ENCODE measurements at regions of chr1 and their contacts with region 1.

Region 1: DNA sequence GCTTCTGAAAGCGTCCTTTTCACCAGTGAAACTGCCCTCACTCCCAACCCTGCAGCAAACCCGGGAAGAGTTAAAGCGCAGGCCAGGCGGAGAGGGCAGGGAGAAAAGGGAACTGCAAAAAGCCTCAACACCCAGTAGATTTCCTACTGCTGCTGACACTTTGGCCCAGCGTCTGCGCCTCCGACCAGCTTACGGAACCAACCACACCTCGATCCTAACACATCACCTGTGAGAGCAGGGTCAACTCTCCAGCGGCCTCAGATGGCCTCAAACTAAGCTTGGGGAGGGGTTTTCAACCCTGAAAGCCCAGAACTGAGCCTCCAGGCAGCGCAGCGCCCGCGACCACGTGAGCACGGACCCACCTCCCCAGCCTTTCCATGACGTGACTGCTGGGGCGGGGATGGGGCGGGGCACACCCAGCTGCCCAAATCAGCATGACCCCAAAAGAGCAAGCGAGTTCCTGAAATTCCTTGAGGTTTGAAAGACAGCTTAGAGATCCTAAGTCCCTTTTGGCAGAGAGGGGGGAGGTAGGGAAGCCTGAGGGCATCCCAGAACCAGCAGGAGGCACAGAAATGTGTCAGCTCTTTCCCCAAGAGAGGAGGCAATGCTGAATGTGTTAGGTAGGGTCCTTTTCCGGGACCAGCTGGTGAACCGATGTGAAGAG is 59.1 kb downstream of the ITPKB start:
- DNase-seq: peak; percentile 79
- H3K4me3 Mint-ChIP-seq: peak overlapping the region; percentile 70
- H3K27ac Mint-ChIP-seq: peak overlapping the region; percentile 79
- H3K4me1 Mint-ChIP-seq: peaks cover 82% of the 10 kb centered on the region
- H3K27me3 Mint-ChIP-seq: no peaks in the 10 kb centered on the region

Region 2: GRCh38 chr1:226653311-226653921 is 26.6 kb before region 1 on chr1:
- CTCF ChIA-PET with region 1: interaction called, 5 read pairs
- POLR2A ChIA-PET with region 1: interaction called, 113 read pairs
- DNase-seq: peak; percentile 75
- H3K4me3 Mint-ChIP-seq: peak overlapping the region; percentile 56
- H3K27ac Mint-ChIP-seq: peak overlapping the region; percentile 88
- H3K4me1 Mint-ChIP-seq: peaks cover 62% of the 10 kb centered on the region
- H3K27me3 Mint-ChIP-seq: no peaks in the 10 kb centered on the region

Region 3: DNA sequence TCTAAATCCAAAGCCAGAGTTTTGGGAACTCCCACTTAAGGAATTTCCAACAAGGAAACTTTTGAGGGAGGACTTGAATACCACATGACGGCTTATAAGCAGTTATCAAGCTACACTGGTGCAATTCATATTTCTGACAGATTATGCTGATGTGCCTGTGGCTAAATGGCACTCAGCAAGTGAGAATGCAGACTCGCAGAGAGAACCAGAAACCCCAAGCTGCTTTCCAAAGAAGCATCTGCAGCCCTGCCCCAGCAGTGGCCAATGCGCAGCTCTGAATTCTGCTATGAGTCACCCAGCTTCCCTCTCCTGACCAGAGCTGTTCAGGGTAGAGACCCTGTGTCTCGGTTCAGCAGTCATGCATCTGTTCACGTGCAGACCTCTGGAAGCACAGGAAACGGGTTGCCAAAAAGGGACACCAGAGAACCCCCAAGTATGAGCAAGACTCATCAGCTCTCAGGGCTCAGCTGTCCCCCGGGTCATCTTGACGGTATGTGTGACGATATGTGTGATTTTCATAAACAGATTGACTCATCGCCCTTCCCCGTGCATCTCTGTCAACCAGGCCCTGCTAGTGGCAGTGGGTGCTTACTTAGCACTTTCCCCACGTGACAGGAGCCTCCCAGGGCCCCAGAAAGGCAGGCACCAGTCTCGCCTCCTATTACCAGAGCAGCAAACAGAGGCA is 17.2 kb before region 1 on chr1:
- CTCF ChIA-PET with region 1: interaction called, 5 read pairs
- POLR2A ChIA-PET with region 1: interaction called, 113 read pairs
- DNase-seq: peak; percentile 89
- H3K4me3 Mint-ChIP-seq: peak overlapping the region; percentile 57
- H3K27ac Mint-ChIP-seq: peak overlapping the region; percentile 92
- H3K4me1 Mint-ChIP-seq: peaks cover 86% of the 10 kb centered on the region
- H3K27me3 Mint-ChIP-seq: no peaks in the 10 kb centered on the region

Region 4: DNA sequence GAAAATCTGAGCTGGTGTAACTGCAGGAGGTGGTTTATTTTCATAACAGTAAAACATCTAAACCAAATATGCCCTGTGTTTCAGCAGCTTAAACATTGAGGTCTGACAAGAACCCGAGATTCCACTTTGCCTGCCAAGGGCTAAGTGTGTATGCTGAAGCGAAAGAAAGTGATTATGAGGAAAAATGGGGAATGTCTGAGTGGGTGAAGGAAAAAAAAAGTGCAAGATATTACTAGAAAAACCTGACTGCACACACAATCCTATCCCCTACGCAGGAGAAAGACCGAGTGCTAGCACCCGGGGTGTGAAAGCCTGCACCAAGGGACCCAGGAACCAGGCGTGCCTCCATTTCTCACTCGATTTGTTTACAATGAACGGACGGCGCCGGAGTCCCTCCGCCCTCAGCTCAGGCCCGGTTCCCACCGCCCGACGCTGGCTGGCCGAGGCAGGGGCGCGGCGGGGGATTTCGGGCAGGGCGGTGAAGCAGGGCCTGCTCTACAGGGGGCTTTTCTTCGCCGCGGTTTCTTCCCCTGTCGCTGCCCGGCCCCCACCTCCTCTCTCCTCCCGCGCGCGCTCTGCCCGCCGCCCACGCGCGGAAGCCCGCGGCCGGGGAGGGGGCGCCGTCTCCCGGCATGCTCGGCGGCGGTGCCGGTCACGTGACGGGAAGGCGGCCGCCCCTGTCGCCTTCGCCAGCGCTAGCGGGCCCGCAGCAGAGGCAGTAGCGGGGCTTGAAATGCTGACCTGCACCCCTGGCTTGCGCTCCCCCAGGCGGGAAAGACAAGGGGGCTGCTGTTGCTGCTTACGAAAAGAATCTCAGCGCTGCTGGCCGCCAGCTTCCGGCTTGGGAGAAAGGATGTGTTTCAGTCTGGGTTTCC is 23.2 kb after region 1 on chr1:
- CTCF ChIA-PET with region 1: interaction called, 4 read pairs
- POLR2A ChIA-PET with region 1: interaction called, 27 read pairs
- DNase-seq: peak; percentile 79
- H3K4me3 Mint-ChIP-seq: peak overlapping the region; percentile 79
- H3K27ac Mint-ChIP-seq: peak overlapping the region; percentile 87
- H3K4me1 Mint-ChIP-seq: peaks cover 48% of the 10 kb centered on the region
- H3K27me3 Mint-ChIP-seq: no peaks in the 10 kb centered on the region

Region 5: DNA sequence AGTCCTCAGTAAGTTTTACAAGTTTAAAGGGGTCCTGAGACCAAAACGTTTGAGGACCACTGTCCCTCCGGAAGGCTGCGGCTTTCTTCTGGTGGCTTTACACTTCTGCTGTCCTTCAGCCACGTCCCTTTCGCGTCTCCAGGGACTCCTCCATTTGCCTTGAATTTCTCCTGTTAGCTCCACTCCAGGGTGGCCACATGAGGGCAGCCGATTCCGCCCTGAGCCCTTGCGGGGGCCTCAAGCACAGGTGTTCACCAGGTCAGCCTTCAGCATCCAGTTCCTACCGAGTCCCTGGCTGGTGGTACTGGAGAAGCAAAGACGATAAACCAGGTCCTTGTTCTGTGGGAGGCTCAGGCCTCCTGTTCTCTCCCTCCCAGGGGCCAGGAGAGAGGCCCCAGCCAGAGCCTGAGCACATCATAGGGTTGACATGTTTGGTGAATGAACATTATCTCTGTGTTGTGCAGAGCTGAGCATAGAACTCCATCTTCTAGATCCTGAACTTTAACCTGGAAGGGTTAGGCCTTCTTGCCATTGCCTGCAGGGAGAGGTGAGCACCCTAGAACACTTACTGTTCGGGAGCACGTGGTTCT is 232.7 kb after region 1 on chr1:
- CTCF ChIA-PET with region 1: no interaction called
- POLR2A ChIA-PET with region 1: no interaction called
- DNase-seq: peak; percentile 42
- H3K4me3 Mint-ChIP-seq: no peak overlapping the region
- H3K27ac Mint-ChIP-seq: no peak overlapping the region
- H3K4me1 Mint-ChIP-seq: peaks cover 19% of the 10 kb centered on the region
- H3K27me3 Mint-ChIP-seq: no peaks in the 10 kb centered on the region

Measured in activated CD4-positive, alpha-beta memory T cell treated with anti-CD3 and anti-CD28 coated beads, Interleukin-2, amount 10 ng/mL, durations not matched to agents 7 days and 5 days (primary cell).